GM12878 (cell line): ENCODE measurements at regions of chr14 and their contacts with region 1.

Region 1: GRCh38 chr14:22570132-22570949 is 18.7 kb downstream of the DAD1 start:
- DNase-seq: peak; percentile 99
- ATAC-seq: peak; percentile 72
- H3K4me3 ChIP-seq: peak overlapping the region; percentile 30
- H3K27ac ChIP-seq: peak overlapping the region; percentile 97
- H3K4me1 ChIP-seq: peaks cover 43% of the 10 kb centered on the region
- H3K27me3 ChIP-seq: no peaks in the 10 kb centered on the region
- CTCF ChIP-seq: peak; percentile 98 to 100 (median 100); a peak in 5 of 6 replicates
- EP300 ChIP-seq: no peak
- POLR2A ChIP-seq: no peak
- RAD21 ChIP-seq: peak; percentile 99

Region 2: GRCh38 chr14:22314181-22314820 is 256.0 kb before region 1 on chr14:
- CTCF ChIA-PET with region 1: interaction called, 26 read pairs
- POLR2A ChIA-PET with region 1: no interaction called
- RAD21 ChIA-PET with region 1: interaction called, 17 read pairs
- SMC1A ChIA-PET with region 1: interaction called, 24 read pairs
- in situ Hi-C with region 1: loop called (anchors 5 kb)
- intact Hi-C with region 1: loop called (anchors 2 kb)
- DNase-seq: peak; percentile 48
- ATAC-seq: peak; percentile 98
- H3K4me3 ChIP-seq: no peak overlapping the region
- H3K27ac ChIP-seq: no peak overlapping the region
- H3K4me1 ChIP-seq: no peaks in the 10 kb centered on the region
- H3K27me3 ChIP-seq: no peaks in the 10 kb centered on the region
- CTCF ChIP-seq: peak; percentile 55 to 80 (median 69); a peak in 5 of 6 replicates
- EP300 ChIP-seq: no peak
- POLR2A ChIP-seq: no peak
- RAD21 ChIP-seq: peak; percentile 75

Region 3: DNA sequence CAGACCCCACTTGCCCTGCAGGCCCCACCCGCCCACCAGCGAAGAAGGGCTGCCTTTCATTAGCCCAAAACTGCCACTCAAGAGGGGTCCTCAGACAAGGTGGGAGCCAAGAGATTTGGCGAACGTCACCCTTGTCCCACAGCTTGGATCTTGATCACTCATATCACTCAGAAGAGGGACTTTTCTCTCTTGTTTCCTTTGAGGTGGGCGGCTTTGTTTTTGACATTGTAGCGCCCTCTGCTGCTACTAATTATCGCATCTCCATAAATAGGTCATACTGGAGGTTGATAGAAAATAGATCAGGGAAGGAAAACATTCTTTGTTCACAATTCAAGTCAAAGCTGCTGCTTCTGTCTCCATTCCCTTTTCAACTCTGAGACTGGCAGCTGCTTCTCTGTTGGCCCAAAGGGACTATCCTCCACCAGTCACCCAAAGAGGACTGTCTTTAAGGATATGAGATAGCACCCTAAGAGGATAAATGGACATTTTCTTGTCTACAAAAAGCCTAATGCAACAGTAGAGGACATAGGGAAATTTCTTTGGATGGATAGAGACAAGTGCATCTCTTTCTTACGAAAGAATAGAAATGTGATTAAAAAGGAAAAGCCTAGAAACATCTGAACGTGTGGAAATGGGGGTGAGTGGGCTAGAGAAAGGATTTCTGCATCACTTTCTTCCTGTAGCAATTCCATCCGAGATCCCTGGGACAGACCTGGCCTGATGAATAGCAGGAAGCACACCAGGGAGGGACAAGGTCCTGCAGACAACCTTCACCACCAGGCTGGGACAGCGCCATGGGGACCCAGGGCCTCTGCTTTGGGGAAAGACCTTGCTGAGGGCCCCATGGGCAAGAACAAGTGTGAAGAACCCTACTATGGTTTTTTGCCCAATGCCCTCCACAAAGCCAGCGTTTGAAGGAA is 97.1 kb before region 1 on chr14:
- CTCF ChIA-PET with region 1: interaction called, 236 read pairs
- POLR2A ChIA-PET with region 1: interaction called, 11 read pairs
- RAD21 ChIA-PET with region 1: interaction called, 171 read pairs
- SMC1A ChIA-PET with region 1: interaction called, 58 read pairs
- in situ Hi-C with region 1: no loop called
- intact Hi-C with region 1: loop called (anchors 1 kb)
- DNase-seq: no peak
- ATAC-seq: peak; percentile 67
- H3K4me3 ChIP-seq: no peak overlapping the region
- H3K27ac ChIP-seq: peak overlapping the region; percentile 49
- H3K4me1 ChIP-seq: peaks cover 50% of the 10 kb centered on the region
- H3K27me3 ChIP-seq: no peaks in the 10 kb centered on the region
- CTCF ChIP-seq: peak; percentile 59 to 72 (median 72)
- EP300 ChIP-seq: no peak
- POLR2A ChIP-seq: no peak
- RAD21 ChIP-seq: peak; percentile 96

Region 4: GRCh38 chr14:22531451-22532344 is 38.6 kb before region 1 on chr14:
- CTCF ChIA-PET with region 1: interaction called, 10 read pairs
- POLR2A ChIA-PET with region 1: interaction called, 6 read pairs
- RAD21 ChIA-PET with region 1: interaction called, 18 read pairs
- SMC1A ChIA-PET with region 1: interaction called, 11 read pairs
- in situ Hi-C with region 1: no loop called
- intact Hi-C with region 1: no loop called
- DNase-seq: peak; percentile 93
- ATAC-seq: peak; percentile 70
- H3K4me3 ChIP-seq: peak overlapping the region; percentile 67
- H3K27ac ChIP-seq: peak overlapping the region; percentile 97
- H3K4me1 ChIP-seq: peaks cover 72% of the 10 kb centered on the region
- H3K27me3 ChIP-seq: no peaks in the 10 kb centered on the region
- CTCF ChIP-seq: no peak
- EP300 ChIP-seq: peak in 1 of 2 experiments; percentile 93; a peak in 2 of 4 replicates
- POLR2A ChIP-seq: peak; percentile 67
- RAD21 ChIP-seq: 0 out of 2 replicates have a peak, but pooled peaks have one; percentile 5

Region 5: GRCh38 chr14:22646570-22647254 is 76.4 kb after region 1 on chr14:
- CTCF ChIA-PET with region 1: interaction called, 206 read pairs
- POLR2A ChIA-PET with region 1: interaction called, 3 read pairs
- RAD21 ChIA-PET with region 1: interaction called, 116 read pairs
- SMC1A ChIA-PET with region 1: interaction called, 113 read pairs
- in situ Hi-C with region 1: loop called (anchors 5 kb)
- intact Hi-C with region 1: loop called (anchors 1 kb)
- DNase-seq: no peak
- ATAC-seq: no peak
- H3K4me3 ChIP-seq: no peak overlapping the region
- H3K27ac ChIP-seq: no peak overlapping the region
- H3K4me1 ChIP-seq: no peaks in the 10 kb centered on the region
- H3K27me3 ChIP-seq: no peaks in the 10 kb centered on the region
- CTCF ChIP-seq: no peak
- EP300 ChIP-seq: no peak
- POLR2A ChIP-seq: no peak
- RAD21 ChIP-seq: no peak

Region 6: DNA sequence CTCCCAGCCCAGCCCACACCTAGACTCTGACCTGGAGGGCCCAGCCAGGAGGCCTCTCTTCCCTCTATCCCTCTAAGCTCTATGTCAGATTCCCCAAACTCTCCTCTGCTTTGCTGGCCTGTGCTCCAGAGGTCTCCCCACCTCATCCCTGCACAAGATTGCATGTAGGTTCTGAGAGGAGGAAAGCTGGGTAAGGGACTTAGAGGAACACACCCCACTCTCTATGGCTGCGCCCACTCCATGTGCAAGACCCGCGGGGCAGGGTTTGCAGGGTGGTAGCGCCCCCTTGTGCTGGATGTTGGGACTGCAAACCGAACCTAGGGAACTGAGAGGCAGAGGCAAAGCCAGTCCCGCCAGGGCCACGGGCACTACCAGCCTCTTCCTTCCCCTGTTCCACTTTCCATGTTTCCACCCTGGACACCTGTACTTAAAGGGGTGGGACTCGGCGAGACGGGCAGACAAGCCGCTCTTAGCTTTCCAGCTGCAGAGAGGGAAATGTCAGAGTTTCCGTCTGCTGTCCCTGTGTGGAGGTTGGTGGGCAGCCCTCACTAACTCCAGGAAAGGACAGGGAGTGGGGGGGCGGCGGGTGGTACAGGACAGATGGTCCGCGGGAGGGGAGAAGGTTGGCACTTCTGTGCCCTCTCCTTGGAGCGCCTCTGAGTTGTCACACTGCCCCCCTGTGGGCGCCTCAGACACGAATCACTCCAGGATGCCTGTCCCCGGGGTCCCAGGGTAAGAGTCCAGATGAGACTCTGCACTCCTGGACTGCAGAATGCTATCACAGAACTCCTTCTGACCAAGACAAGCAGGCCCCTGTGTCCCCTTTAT is 282.8 kb after region 1 on chr14:
- CTCF ChIA-PET with region 1: interaction called, 124 read pairs
- POLR2A ChIA-PET with region 1: interaction called, 7 read pairs
- RAD21 ChIA-PET with region 1: interaction called, 79 read pairs
- SMC1A ChIA-PET with region 1: interaction called, 92 read pairs
- in situ Hi-C with region 1: loop called (anchors 5 kb)
- intact Hi-C with region 1: loop called (anchors 1 kb)
- DNase-seq: peak; percentile 63
- ATAC-seq: peak; percentile 95
- H3K4me3 ChIP-seq: peak overlapping the region; percentile 75
- H3K27ac ChIP-seq: peak overlapping the region; percentile 89
- H3K4me1 ChIP-seq: peaks cover 17% of the 10 kb centered on the region
- H3K27me3 ChIP-seq: no peaks in the 10 kb centered on the region
- CTCF ChIP-seq: peak; percentile 85 to 98 (median 93)
- EP300 ChIP-seq: no peak
- POLR2A ChIP-seq: no peak
- RAD21 ChIP-seq: peak; percentile 98

Region 7: GRCh38 chr14:22962061-22962676 is 391.8 kb after region 1 on chr14:
- CTCF ChIA-PET with region 1: no interaction called
- POLR2A ChIA-PET with region 1: no interaction called
- RAD21 ChIA-PET with region 1: no interaction called
- SMC1A ChIA-PET with region 1: no interaction called
- in situ Hi-C with region 1: no loop called
- intact Hi-C with region 1: no loop called
- DNase-seq: no peak
- ATAC-seq: no peak
- H3K4me3 ChIP-seq: no peak overlapping the region
- H3K27ac ChIP-seq: no peak overlapping the region
- H3K4me1 ChIP-seq: no peaks in the 10 kb centered on the region
- H3K27me3 ChIP-seq: no peaks in the 10 kb centered on the region
- CTCF ChIP-seq: no peak
- EP300 ChIP-seq: no peak
- POLR2A ChIP-seq: no peak
- RAD21 ChIP-seq: no peak

Region 8: DNA sequence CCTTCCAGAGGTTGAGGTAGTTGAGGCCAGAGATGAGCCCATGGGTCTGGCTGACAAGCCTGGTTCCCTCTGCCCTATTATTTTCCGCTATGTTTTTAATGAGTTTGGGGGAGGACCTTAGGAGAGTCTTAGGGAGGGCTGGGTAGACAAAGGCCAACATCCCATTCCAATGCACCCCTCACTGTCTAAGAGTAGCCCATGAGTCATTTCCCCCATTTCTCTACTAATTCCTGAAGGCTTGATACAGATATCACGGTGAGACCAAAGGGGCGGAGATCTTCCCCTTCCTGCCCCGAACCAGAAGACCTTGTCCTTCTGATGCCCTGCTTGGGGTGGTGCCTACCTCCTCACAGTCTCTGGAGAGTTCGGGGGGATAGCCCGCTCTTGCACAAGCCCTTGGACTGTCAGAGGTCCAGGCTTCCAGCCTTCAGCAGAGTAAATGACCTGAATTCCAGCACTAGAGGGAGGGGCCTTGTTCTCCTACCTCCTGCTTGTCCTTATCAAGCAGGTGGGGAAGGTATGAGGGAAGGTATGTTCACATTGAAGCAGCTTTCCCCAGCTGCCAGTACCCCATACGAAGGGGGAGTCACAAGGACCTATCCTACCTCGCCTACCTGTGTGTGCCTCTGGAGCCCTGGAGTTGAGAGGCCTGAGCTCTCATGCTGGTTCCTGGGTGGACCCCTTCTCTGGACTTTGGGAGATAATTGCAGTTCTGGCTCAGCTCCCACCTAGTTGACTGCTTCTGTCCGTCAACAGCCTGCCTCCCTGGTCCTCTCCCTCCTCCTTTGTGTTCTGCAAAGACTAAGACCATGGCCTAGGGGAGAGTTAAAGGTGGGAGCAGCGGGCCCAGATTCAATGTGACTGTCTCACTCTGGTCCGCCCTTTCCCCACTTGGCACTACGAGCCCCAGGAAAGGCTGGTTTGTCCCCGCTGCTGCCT is 475.3 kb after region 1 on chr14:
- CTCF ChIA-PET with region 1: no interaction called
- POLR2A ChIA-PET with region 1: no interaction called
- RAD21 ChIA-PET with region 1: no interaction called
- SMC1A ChIA-PET with region 1: no interaction called
- in situ Hi-C with region 1: no loop called
- intact Hi-C with region 1: no loop called
- DNase-seq: no peak
- ATAC-seq: no peak
- H3K4me3 ChIP-seq: no peak overlapping the region
- H3K27ac ChIP-seq: no peak overlapping the region
- H3K4me1 ChIP-seq: no peaks in the 10 kb centered on the region
- H3K27me3 ChIP-seq: no peaks in the 10 kb centered on the region; a peak in 2 of 4 replicates
- CTCF ChIP-seq: no peak
- EP300 ChIP-seq: no peak
- POLR2A ChIP-seq: no peak
- RAD21 ChIP-seq: no peak

Region 9: DNA sequence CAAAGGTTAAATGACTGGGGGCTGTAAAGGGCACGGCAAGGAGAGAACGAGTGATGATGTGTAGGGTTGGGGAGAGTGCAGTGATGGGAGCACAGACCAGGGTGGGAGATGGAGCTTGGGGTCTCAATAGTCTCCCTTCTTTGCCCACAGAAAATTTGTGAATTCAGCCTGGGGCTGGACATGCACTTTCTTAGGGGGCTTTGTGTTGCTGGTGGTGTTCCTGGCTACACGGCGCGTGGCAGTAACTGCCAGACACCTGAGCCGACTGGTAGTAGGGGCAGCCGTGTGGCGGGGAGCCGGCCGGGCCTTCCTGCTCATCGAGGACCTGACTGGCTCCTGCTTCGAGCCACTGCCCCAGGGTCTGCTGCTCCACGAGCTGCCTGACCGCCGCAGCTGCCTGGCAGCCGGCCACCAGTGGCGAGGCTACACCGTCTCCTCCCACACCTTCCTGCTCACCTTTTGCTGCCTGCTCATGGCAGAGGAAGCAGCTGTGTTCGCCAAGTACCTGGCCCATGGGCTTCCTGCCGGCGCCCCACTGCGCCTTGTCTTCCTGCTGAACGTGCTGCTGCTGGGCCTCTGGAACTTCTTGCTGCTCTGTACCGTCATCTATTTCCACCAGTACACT is 1561.8 kb after region 1 on chr14:
- CTCF ChIA-PET with region 1: no interaction called
- POLR2A ChIA-PET with region 1: no interaction called
- RAD21 ChIA-PET with region 1: no interaction called
- SMC1A ChIA-PET with region 1: no interaction called
- in situ Hi-C with region 1: no loop called
- intact Hi-C with region 1: no loop called
- DNase-seq: no peak
- ATAC-seq: no peak
- H3K4me3 ChIP-seq: no peak overlapping the region
- H3K27ac ChIP-seq: no peak overlapping the region
- H3K4me1 ChIP-seq: peaks cover 28% of the 10 kb centered on the region
- H3K27me3 ChIP-seq: no peaks in the 10 kb centered on the region
- CTCF ChIP-seq: no peak
- EP300 ChIP-seq: no peak
- POLR2A ChIP-seq: no peak
- RAD21 ChIP-seq: no peak